ENCODE measurements at regions of chr6 and their contacts with region 1.

Region 1: GRCh38 chr6:150891888-150892485 is 26.5 kb downstream of the MTHFD1L start:
- DNase-seq: peak in 2 of 3 donors; percentile 38 to 69
- ATAC-seq: peak; percentile 86 to 96 (median 92)
- H3K4me3 ChIP-seq: no peak overlapping the region
- H3K27ac ChIP-seq: no peak overlapping the region
- H3K4me1 ChIP-seq: no peaks in the 10 kb centered on the region
- H3K27me3 ChIP-seq: no peaks in the 10 kb centered on the region
- CTCF ChIP-seq: peak; percentile 77 to 91 (median 88)
- POLR2A ChIP-seq: no peak

Region 2: DNA sequence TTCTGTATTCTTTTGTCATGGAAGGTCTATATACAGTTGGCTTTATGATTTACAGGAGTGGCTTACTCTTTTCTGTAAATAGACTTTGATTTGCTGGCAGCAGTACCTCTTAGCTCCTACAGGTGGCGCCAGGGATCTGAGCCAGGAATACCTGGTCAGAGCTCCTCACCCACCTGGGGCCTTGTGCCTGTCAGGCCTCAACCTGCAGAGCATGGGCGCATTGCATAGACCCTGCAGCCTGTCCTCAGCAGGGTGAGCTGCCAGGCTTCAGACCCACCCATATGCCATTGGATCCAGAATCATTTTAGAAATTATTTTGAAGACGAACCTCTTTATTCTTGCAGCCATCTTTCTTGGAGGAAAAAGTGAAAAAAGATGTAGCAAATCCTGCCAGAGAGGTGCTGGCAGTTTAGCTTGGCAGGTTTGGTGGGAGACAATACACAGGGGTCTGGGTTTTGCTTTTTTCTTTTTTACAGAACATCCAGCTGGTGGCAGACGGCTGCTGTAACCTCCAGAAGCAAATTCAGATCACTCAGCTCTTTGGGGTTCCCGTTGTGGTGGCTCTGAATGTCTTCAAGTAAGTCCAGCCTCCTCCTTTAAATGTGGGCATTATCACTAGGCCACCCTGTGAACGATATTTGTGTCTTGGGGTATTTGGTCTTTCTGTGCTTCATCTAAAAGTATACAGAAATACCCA is 122.6 kb after region 1 on chr6:
- intact Hi-C with region 1: loop called in 1 of 2 experiments (anchors 10 kb)
- DNase-seq: peak; percentile 73 to 76 (median 74)
- ATAC-seq: peak; percentile 94 to 96 (median 94)
- H3K4me3 ChIP-seq: no peak overlapping the region
- H3K27ac ChIP-seq: no peak overlapping the region
- H3K4me1 ChIP-seq: peaks cover 0 to 2% (median 0%) of the 10 kb centered on the region in 4 donors
- H3K27me3 ChIP-seq: no peaks in the 10 kb centered on the region
- CTCF ChIP-seq: peak; percentile 99
- POLR2A ChIP-seq: no peak

Region 3: GRCh38 chr6:151112130-151112529 is 220.1 kb after region 1 on chr6:
- intact Hi-C with region 1: no loop called
- DNase-seq: peak in 1 of 3 donors; percentile 35
- ATAC-seq: no peak
- H3K4me3 ChIP-seq: no peak overlapping the region
- H3K27ac ChIP-seq: no peak overlapping the region
- H3K4me1 ChIP-seq: no peaks in the 10 kb centered on the region
- H3K27me3 ChIP-seq: no peaks in the 10 kb centered on the region
- CTCF ChIP-seq: no peak
- POLR2A ChIP-seq: no peak

Region 4: GRCh38 chr6:151330134-151330696 is 438.2 kb after region 1 on chr6:
- intact Hi-C with region 1: loop called (anchors 10 kb)
- DNase-seq: no peak
- ATAC-seq: no peak
- H3K4me3 ChIP-seq: no peak overlapping the region
- H3K27ac ChIP-seq: no peak overlapping the region
- H3K4me1 ChIP-seq: peaks cover 0 to 7% (median 2%) of the 10 kb centered on the region in 4 donors
- H3K27me3 ChIP-seq: peaks cover 0 to 2% of the 10 kb centered on the region in 2 donors
- CTCF ChIP-seq: no peak
- POLR2A ChIP-seq: no peak